ENCODE measurements at regions of chr17 and their contacts with region 1.

Region 1: DNA sequence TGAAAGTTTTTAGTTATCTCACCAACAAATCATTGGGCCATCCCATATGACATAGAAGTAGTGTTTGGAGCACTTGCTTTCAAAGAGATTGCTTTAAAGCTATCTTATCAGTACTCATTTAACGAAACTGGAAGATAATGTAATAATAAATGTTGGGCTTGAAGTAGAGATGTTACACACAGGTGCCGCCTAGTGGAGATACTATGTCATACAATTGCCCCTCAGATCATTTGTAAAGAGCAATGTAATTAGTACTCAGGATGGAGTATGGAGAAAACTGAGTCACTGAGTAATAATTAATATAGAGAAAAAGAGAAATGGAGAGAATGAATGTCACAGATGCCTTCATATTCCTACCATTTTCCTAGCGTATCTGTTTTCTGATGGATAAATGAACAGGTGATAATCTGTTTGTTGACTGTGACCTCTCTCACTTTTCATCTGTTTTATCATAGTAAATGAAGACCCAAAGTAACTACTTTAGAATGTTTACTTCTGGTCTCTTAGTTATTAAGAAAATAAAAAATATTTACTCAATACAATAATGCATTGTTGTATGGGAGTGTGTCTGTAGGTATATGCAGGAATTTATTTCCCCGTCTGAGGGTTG is 80.4 kb downstream of the EFCAB5 start:
- DNase-seq: peak; percentile 69
- ATAC-seq: peak; percentile 75
- H3K4me3 ChIP-seq: no peak overlapping the region
- H3K4me3 Mint-ChIP-seq: no peak overlapping the region
- H3K27ac ChIP-seq: no peak overlapping the region
- H3K27ac Mint-ChIP-seq: no peak overlapping the region
- H3K4me1 ChIP-seq: no peaks in the 10 kb centered on the region
- H3K4me1 Mint-ChIP-seq: peaks cover 1% of the 10 kb centered on the region
- H3K27me3 ChIP-seq: no peaks in the 10 kb centered on the region
- H3K27me3 Mint-ChIP-seq: peaks cover 3% of the 10 kb centered on the region
- CTCF ChIP-seq: peak; percentile 91

Region 2: GRCh38 chr17:29579866-29580771 is 441.7 kb before region 1 on chr17:
- CTCF ChIA-PET with region 1: interaction called, 3 read pairs
- POLR2A ChIA-PET with region 1: no interaction called
- intact Hi-C with region 1: loop called (anchors 1 kb)
- DNase-seq: peak; percentile 93
- ATAC-seq: peak; percentile 96
- H3K4me3 ChIP-seq: no peak overlapping the region
- H3K4me3 Mint-ChIP-seq: no peak overlapping the region
- H3K27ac ChIP-seq: no peak overlapping the region
- H3K27ac Mint-ChIP-seq: peak overlapping the region; percentile 87
- H3K4me1 ChIP-seq: peaks cover 19 to 23% of the 10 kb centered on the region in 2 donors
- H3K4me1 Mint-ChIP-seq: peaks cover 27% of the 10 kb centered on the region
- H3K27me3 ChIP-seq: no peaks in the 10 kb centered on the region
- H3K27me3 Mint-ChIP-seq: no peaks in the 10 kb centered on the region
- CTCF ChIP-seq: peak; percentile 79

Region 3: GRCh38 chr17:29867643-29868181 is 154.1 kb before region 1 on chr17:
- CTCF ChIA-PET with region 1: interaction called, 13 read pairs
- POLR2A ChIA-PET with region 1: no interaction called
- intact Hi-C with region 1: no loop called
- DNase-seq: peak; percentile 29
- ATAC-seq: no peak
- H3K4me3 ChIP-seq: no peak overlapping the region
- H3K4me3 Mint-ChIP-seq: no peak overlapping the region
- H3K27ac ChIP-seq: no peak overlapping the region
- H3K27ac Mint-ChIP-seq: no peak overlapping the region
- H3K4me1 ChIP-seq: peaks cover 21 to 32% of the 10 kb centered on the region in 2 donors
- H3K4me1 Mint-ChIP-seq: peaks cover 45% of the 10 kb centered on the region
- H3K27me3 ChIP-seq: no peaks in the 10 kb centered on the region
- H3K27me3 Mint-ChIP-seq: no peaks in the 10 kb centered on the region
- CTCF ChIP-seq: no peak

Region 4: GRCh38 chr17:30093463-30094147 is 71.8 kb after region 1 on chr17:
- CTCF ChIA-PET with region 1: interaction called, 12 read pairs
- POLR2A ChIA-PET with region 1: no interaction called
- intact Hi-C with region 1: loop called (anchors 1 kb)
- DNase-seq: peak; percentile 75
- ATAC-seq: peak; percentile 57
- H3K4me3 ChIP-seq: no peak overlapping the region
- H3K4me3 Mint-ChIP-seq: no peak overlapping the region
- H3K27ac ChIP-seq: no peak overlapping the region
- H3K27ac Mint-ChIP-seq: no peak overlapping the region
- H3K4me1 ChIP-seq: peaks cover 6 to 7% of the 10 kb centered on the region in 2 donors
- H3K4me1 Mint-ChIP-seq: peaks cover 12% of the 10 kb centered on the region
- H3K27me3 ChIP-seq: peaks cover 0 to 9% (median 8%) of the 10 kb centered on the region in 4 experiments
- H3K27me3 Mint-ChIP-seq: peaks cover 12% of the 10 kb centered on the region
- CTCF ChIP-seq: peak; percentile 90